ENCODE measurements at regions of chr2 and their contacts with region 1.

Region 1: GRCh38 chr2:19955544-19956422 is 34.1 kb downstream of the WDR35 start:
- DNase-seq: peak; percentile 66
- H3K4me3 Mint-ChIP-seq: no peak overlapping the region
- H3K27ac Mint-ChIP-seq: no peak overlapping the region
- H3K4me1 Mint-ChIP-seq: no peaks in the 10 kb centered on the region
- H3K27me3 Mint-ChIP-seq: no peaks in the 10 kb centered on the region

Region 2: GRCh38 chr2:20065885-20066602 is 110.3 kb after region 1 on chr2:
- CTCF ChIA-PET with region 1: no interaction called
- DNase-seq: no peak
- H3K4me3 Mint-ChIP-seq: no peak overlapping the region
- H3K27ac Mint-ChIP-seq: no peak overlapping the region
- H3K4me1 Mint-ChIP-seq: no peaks in the 10 kb centered on the region
- H3K27me3 Mint-ChIP-seq: peaks cover 25% of the 10 kb centered on the region

Region 3: DNA sequence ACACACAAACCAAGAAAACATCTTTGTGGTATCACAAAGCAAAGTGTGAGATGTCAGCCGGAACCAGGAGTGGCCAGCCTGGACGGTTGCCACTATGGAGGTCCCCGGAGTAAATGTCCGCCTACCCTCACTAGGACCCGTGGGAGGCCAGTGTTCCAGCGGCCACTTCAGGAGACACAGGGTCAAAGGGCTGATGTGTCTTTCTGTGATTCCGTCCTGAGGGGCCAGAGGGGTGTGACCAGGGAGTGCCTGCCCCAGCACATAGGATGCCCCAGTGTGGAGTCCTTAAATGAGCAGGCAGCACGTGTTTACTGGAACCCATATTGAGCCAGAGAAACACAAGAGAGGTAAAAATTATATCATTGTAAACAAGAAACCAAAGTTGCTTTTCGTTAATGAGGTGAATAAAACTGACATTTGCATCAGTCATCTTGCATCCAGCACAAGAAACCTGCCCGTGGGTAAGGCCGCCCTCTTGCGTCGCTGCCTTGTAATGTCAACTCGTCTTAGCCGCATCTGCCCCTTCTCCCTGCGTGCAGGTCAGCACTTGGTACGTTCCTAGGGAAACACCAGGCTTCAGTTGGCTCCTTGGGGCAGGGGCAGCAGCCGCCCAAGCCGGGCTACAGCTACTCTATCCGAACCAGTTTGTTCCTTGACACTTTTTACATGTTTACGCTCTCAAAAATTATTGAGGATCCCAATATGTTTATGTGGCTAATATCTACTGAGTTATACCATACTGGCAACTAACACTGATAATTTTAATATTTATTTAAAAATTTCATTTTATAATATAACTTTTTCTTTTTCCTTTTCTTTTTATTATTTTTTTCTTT is 142.3 kb after region 1 on chr2:
- CTCF ChIA-PET with region 1: interaction called, 16 read pairs
- DNase-seq: peak; percentile 85
- H3K4me3 Mint-ChIP-seq: no peak overlapping the region
- H3K27ac Mint-ChIP-seq: no peak overlapping the region
- H3K4me1 Mint-ChIP-seq: no peaks in the 10 kb centered on the region
- H3K27me3 Mint-ChIP-seq: peaks cover 43% of the 10 kb centered on the region